Activated CD4-positive, alpha-beta T cell treated with anti-CD3 and anti-CD28 coated beads, Interleukin-2, amount 10 ng/mL, durations not matched to agents 24 days and 14 days (primary cell): ENCODE measurements at regions of chr1 and their contacts with region 1.

Region 1: GRCh38 chr1:43073490-43074230 is 98.4 kb downstream of the EBNA1BP2 start:
- DNase-seq: peak; percentile 92
- H3K4me3 Mint-ChIP-seq: no peak overlapping the region
- H3K27ac Mint-ChIP-seq: no peak overlapping the region
- H3K4me1 Mint-ChIP-seq: peaks cover 2% of the 10 kb centered on the region
- H3K27me3 Mint-ChIP-seq: peaks cover 7% of the 10 kb centered on the region

Region 2: GRCh38 chr1:42576935-42577334 is 496.7 kb before region 1 on chr1:
- intact Hi-C with region 1: loop called (anchors 5 kb)
- DNase-seq: no peak
- H3K4me3 Mint-ChIP-seq: no peak overlapping the region
- H3K27ac Mint-ChIP-seq: no peak overlapping the region
- H3K4me1 Mint-ChIP-seq: no peaks in the 10 kb centered on the region
- H3K27me3 Mint-ChIP-seq: peaks cover 2% of the 10 kb centered on the region

Region 3: GRCh38 chr1:42777852-42778251 is 295.8 kb before region 1 on chr1:
- intact Hi-C with region 1: loop called (anchors 1 kb)
- DNase-seq: peak; percentile 83
- H3K4me3 Mint-ChIP-seq: no peak overlapping the region
- H3K27ac Mint-ChIP-seq: no peak overlapping the region
- H3K4me1 Mint-ChIP-seq: peaks cover 27% of the 10 kb centered on the region
- H3K27me3 Mint-ChIP-seq: no peaks in the 10 kb centered on the region

Region 4: DNA sequence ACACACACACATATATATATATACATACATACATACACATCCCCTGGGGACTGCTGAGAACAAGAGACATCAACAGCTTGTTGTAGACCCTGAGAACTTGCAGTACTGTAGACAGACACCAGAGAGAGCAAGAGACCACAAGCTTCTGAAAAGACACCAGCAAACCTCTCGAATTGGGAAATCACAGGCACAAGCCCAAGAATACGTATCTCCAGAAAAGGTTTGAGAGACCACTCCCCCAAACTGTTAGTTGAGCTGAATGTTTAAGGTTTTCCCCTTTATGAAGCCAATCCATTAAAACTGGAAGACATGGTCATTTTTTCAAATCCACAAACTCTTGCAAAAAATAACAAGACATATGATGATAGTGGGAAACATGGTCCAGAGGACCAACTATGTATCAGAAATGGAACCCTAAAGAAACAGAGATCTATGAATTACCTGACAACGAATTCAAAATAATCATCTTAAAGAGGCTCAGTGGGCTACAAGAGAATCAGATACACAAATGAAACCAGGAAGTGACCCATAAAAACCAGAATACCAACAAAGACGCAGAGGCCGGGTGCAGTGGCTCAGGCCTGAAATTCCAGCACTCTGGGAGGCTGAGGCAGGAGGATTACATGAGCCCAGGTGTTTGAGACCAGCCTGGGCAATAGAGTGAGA is 160.1 kb before region 1 on chr1:
- intact Hi-C with region 1: loop called (anchors 1 kb)
- DNase-seq: peak; percentile 89
- H3K4me3 Mint-ChIP-seq: no peak overlapping the region
- H3K27ac Mint-ChIP-seq: no peak overlapping the region
- H3K4me1 Mint-ChIP-seq: peaks cover 2% of the 10 kb centered on the region
- H3K27me3 Mint-ChIP-seq: no peaks in the 10 kb centered on the region

Region 5: GRCh38 chr1:42992054-42992645 is 81.5 kb before region 1 on chr1:
- intact Hi-C with region 1: no loop called
- DNase-seq: no peak
- H3K4me3 Mint-ChIP-seq: no peak overlapping the region
- H3K27ac Mint-ChIP-seq: no peak overlapping the region
- H3K4me1 Mint-ChIP-seq: no peaks in the 10 kb centered on the region
- H3K27me3 Mint-ChIP-seq: no peaks in the 10 kb centered on the region